Keratinocyte (primary cell): ENCODE measurements at regions of chr2 and their contacts with region 1.

Region 1: GRCh38 chr2:70647873-70648481 is 94.4 kb upstream of the TGFA start:
- DNase-seq: peak; percentile 21
- H3K4me3 ChIP-seq: no peak overlapping the region
- H3K27ac ChIP-seq: no peak overlapping the region
- H3K4me1 ChIP-seq: no peaks in the 10 kb centered on the region
- H3K27me3 ChIP-seq: peaks cover 2% of the 10 kb centered on the region
- CTCF ChIP-seq: peak; percentile 100

Region 2: GRCh38 chr2:70472221-70472890 is 175.6 kb before region 1 on chr2:
- dilution Hi-C with region 1: loop called (anchors 25 kb)
- DNase-seq: no peak
- H3K4me3 ChIP-seq: no peak overlapping the region
- H3K27ac ChIP-seq: no peak overlapping the region
- H3K4me1 ChIP-seq: no peaks in the 10 kb centered on the region
- H3K27me3 ChIP-seq: no peaks in the 10 kb centered on the region
- CTCF ChIP-seq: no peak

Region 3: GRCh38 chr2:70523996-70524965 is 123.7 kb before region 1 on chr2:
- dilution Hi-C with region 1: no loop called
- DNase-seq: peak; percentile 95
- H3K4me3 ChIP-seq: peak overlapping the region in 2 of 3 experiments; percentile 46 to 64
- H3K27ac ChIP-seq: peak overlapping the region; percentile 100
- H3K4me1 ChIP-seq: peaks cover 79% of the 10 kb centered on the region
- H3K27me3 ChIP-seq: no peaks in the 10 kb centered on the region
- CTCF ChIP-seq: no peak

Region 4: GRCh38 chr2:70671092-70671675 is 23.2 kb after region 1 on chr2:
- dilution Hi-C with region 1: no loop called
- DNase-seq: no peak
- H3K4me3 ChIP-seq: no peak overlapping the region
- H3K27ac ChIP-seq: no peak overlapping the region
- H3K4me1 ChIP-seq: no peaks in the 10 kb centered on the region
- H3K27me3 ChIP-seq: peaks cover 4% of the 10 kb centered on the region
- CTCF ChIP-seq: no peak